ENCODE measurements at regions of chr11 and their contacts with region 1.

Region 1: DNA sequence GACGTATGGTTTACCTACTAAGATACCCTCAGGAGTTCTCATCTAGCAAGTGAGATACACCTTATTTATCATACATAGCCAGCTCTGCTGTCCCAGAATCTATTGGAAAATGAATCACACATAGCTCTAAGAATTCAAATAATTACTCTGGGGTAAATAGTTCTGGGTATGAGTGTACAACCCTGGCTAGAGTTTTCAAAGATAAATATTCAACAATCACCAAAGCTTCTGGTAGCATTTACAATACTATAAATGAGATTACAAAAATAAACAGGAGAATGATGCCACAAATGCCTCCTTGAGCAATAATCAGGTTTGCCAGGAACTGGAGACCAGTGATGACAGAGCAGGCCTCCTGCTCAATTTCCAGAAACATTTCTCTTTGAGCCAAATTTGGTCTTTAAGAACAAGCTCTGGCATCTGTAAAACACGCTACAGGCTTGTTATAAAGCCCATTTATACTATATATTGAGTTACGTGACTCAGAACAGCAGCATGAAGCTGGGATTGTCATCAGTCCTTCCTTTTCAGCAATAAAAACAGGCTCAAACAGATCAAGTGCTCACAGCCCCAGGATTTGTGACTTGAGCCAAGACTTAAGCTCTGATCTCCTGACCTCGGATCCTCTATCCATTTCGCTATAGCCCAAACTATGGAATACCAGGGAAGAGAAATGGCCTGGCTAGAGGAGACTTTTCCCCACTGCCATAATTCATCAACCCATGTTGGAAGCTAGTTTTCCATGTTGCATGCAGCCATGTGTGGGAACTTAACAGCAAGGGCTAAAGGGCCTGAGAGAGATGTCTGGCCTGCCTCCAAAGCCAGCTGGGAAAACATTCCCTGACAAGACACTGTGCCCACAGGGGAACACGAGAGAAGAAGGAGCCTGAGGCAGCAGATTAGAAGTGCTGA is 19.7 kb downstream of the RAB30 start:
- DNase-seq: peak in 1 of 2 experiments; percentile 34
- H3K4me3 ChIP-seq: no peak overlapping the region
- H3K4me3 Mint-ChIP-seq: no peak overlapping the region
- H3K27ac Mint-ChIP-seq: no peak overlapping the region
- H3K4me1 ChIP-seq: no peaks in the 10 kb centered on the region; the same call in 1 of the 2 replicates
- H3K4me1 Mint-ChIP-seq: peaks cover 28% of the 10 kb centered on the region
- H3K27me3 ChIP-seq: no peaks in the 10 kb centered on the region
- H3K27me3 Mint-ChIP-seq: no peaks in the 10 kb centered on the region
- CTCF ChIP-seq: no peak

Region 2: DNA sequence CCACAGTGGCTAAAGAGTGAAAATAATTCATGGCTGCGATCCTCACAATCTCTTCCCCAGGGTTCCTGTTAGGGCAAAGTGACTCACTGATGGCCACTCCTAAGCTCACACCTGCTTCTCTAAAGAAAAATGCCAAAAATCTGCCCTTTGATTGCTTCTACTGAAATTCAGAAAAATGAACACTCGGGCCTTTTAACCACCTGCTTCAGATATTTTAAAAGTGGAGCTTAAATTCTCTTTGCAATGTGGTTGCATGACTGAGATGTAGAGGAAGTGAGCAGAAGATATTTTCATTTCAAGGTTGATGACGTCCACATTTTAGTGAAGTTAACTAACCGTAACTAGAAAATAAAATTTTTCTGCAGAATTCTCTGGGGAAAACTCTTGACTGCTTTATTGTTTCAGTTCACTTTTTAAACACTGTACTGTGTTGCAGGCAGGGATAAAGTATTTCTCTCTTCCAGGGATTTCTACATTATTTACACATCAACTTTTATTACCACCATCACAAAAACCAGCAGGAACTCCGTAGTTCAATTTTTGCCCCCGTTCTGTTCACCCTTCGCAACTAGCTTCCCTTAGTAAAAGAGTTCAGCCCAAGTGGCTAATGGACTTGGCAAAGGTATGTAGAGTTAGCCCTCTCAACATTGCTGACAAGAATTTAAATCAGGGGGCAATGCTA is 11.2 kb after region 1 on chr11:
- CTCF ChIA-PET with region 1: no interaction called
- POLR2A ChIA-PET with region 1: interaction called, 11 read pairs
- intact Hi-C with region 1: no loop called
- DNase-seq: peak in 1 of 2 experiments; percentile 24
- H3K4me3 ChIP-seq: no peak overlapping the region
- H3K4me3 Mint-ChIP-seq: peak overlapping the region; percentile 4
- H3K27ac Mint-ChIP-seq: peak overlapping the region; percentile 20
- H3K4me1 ChIP-seq: peaks cover 17% of the 10 kb centered on the region
- H3K4me1 Mint-ChIP-seq: peaks cover 19% of the 10 kb centered on the region
- H3K27me3 ChIP-seq: no peaks in the 10 kb centered on the region
- H3K27me3 Mint-ChIP-seq: no peaks in the 10 kb centered on the region
- CTCF ChIP-seq: no peak